GM12878 (cell line): ENCODE measurements at regions of chrX and their contacts with region 1.

Region 1: DNA sequence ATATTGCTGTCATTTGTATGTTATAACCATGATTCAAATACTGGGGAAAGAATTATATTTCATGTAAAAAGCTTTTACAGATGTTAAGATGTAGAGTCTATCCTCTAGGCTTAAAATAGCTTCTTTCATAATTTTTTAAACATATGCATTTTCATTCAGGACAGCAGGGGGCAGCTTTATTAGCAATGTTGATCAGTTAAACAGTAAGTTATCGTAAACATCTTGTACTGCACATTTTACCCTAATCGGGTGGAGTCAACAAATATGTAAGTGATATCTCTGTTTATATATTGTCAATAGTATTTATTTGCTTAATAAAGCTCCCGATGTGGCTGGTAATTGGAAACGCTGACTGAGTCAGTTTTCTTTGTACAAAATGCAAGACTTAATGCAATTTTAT is 142.5 kb upstream of the MED14 start:
- DNase-seq: no peak
- ATAC-seq: peak; percentile 67
- H3K4me3 ChIP-seq: no peak overlapping the region
- H3K27ac ChIP-seq: no peak overlapping the region
- H3K4me1 ChIP-seq: no peaks in the 10 kb centered on the region
- H3K27me3 ChIP-seq: no peaks in the 10 kb centered on the region
- CTCF ChIP-seq: peak; percentile 24 to 44 (median 29); a peak in 4 of 6 replicates
- EP300 ChIP-seq: no peak
- POLR2A ChIP-seq: no peak
- RAD21 ChIP-seq: peak; percentile 37; the same call in 1 of the 2 replicates

Region 2: GRCh38 chrX:40853815-40854121 is 24.1 kb before region 1 on chrX:
- CTCF ChIA-PET with region 1: interaction called, 3 read pairs
- POLR2A ChIA-PET with region 1: no interaction called
- RAD21 ChIA-PET with region 1: interaction called, 5 read pairs
- SMC1A ChIA-PET with region 1: interaction called, 10 read pairs
- in situ Hi-C with region 1: no loop called
- intact Hi-C with region 1: no loop called
- DNase-seq: no peak
- ATAC-seq: peak; percentile 45
- H3K4me3 ChIP-seq: no peak overlapping the region
- H3K27ac ChIP-seq: peak overlapping the region; percentile 13; the same call in 1 of the 2 replicates
- H3K4me1 ChIP-seq: 0 out of 2 replicates have a peak, but pooled peaks cover 3% of the 10 kb centered on the region
- H3K27me3 ChIP-seq: no peaks in the 10 kb centered on the region
- CTCF ChIP-seq: no peak
- EP300 ChIP-seq: no peak
- POLR2A ChIP-seq: no peak
- RAD21 ChIP-seq: no peak

Region 3: DNA sequence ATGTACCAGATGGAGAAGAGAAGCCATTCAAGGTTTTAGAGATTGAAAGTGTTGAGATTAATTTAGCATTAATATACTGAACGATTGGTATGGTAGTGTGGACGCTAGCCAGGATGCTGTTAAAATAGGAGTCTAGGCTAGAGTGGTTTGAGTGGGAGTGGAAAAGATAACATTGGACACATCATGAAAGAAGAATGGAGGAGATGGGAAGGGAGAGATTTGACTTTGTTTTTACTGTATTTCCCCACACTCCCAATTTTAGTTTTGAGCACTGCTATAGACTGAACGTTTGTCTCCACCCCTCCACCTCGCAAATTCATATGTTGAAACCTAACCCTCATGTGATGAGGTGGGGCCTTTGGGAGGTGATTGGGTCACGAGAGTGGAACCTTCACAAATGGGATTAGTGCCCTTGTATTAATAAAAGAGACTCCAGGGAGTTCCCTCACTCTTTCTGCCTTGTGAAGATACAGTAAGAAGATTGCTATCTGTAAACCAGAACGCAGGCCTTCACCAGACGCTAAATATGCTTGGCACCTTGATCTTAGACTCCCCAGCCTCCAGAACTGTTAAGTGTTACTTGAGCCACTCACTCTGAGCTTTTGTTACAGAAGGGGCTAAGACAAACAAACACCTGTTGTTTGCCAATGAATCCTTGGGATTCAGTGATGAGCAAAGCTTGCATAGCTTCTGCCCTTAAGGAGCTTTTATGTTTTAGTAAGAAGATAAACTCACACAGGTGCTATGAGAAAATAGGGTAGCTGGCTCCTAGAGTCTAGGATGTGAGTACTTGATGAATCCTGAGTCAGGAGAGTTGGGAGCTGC is 233.1 kb after region 1 on chrX:
- CTCF ChIA-PET with region 1: interaction called, 105 read pairs
- POLR2A ChIA-PET with region 1: no interaction called
- RAD21 ChIA-PET with region 1: interaction called, 67 read pairs
- SMC1A ChIA-PET with region 1: interaction called, 109 read pairs
- in situ Hi-C with region 1: no loop called
- intact Hi-C with region 1: no loop called
- DNase-seq: no peak
- ATAC-seq: no peak
- H3K4me3 ChIP-seq: no peak overlapping the region
- H3K27ac ChIP-seq: no peak overlapping the region
- H3K4me1 ChIP-seq: peaks cover 4% of the 10 kb centered on the region; the same call in 1 of the 2 replicates
- H3K27me3 ChIP-seq: no peaks in the 10 kb centered on the region
- CTCF ChIP-seq: no peak
- EP300 ChIP-seq: no peak
- POLR2A ChIP-seq: no peak
- RAD21 ChIP-seq: no peak

Region 4: GRCh38 chrX:41333744-41334259 is 455.9 kb after region 1 on chrX and contains the start of gene DDX3X:
- CTCF ChIA-PET with region 1: no interaction called
- POLR2A ChIA-PET with region 1: no interaction called
- RAD21 ChIA-PET with region 1: no interaction called
- SMC1A ChIA-PET with region 1: no interaction called
- in situ Hi-C with region 1: no loop called
- intact Hi-C with region 1: loop called (anchors 10 kb)
- DNase-seq: peak; percentile 91
- ATAC-seq: peak; percentile 72
- H3K4me3 ChIP-seq: peak within 1 kb of the TSS; percentile 91
- H3K27ac ChIP-seq: peak within 1 kb of the TSS; percentile 99
- H3K4me1 ChIP-seq: peaks cover 10% of the 10 kb centered on the region
- H3K27me3 ChIP-seq: no peaks in the 10 kb centered on the region; a peak in 1 of 4 replicates
- CTCF ChIP-seq: peak; percentile 19 to 37 (median 29); a peak in 5 of 6 replicates
- EP300 ChIP-seq: peak in 1 of 2 experiments; percentile 4; a peak in 1 of 4 replicates
- POLR2A ChIP-seq: no peak; the same call in none of the 2 replicates
- RAD21 ChIP-seq: 0 out of 2 replicates have a peak, but pooled peaks have one; percentile 3
- polyA plus RNA-seq, gene DDX3X: 52.0 to 56.7 TPM